Activated CD4-positive, alpha-beta T cell treated with anti-CD3 and anti-CD28 coated beads, Interleukin-2, amount 10 ng/mL, durations not matched to agents 7 days and 5 days (primary cell): ENCODE measurements at regions of chr2 and their contacts with region 1.

Region 1: GRCh38 chr2:104862058-104862941 is 8.4 kb downstream of the POU3F3 start:
- DNase-seq: no peak
- H3K4me3 Mint-ChIP-seq: no peak overlapping the region
- H3K27ac Mint-ChIP-seq: no peak overlapping the region
- H3K4me1 Mint-ChIP-seq: peaks cover 7% of the 10 kb centered on the region
- H3K27me3 Mint-ChIP-seq: peaks cover 88% of the 10 kb centered on the region

Region 2: DNA sequence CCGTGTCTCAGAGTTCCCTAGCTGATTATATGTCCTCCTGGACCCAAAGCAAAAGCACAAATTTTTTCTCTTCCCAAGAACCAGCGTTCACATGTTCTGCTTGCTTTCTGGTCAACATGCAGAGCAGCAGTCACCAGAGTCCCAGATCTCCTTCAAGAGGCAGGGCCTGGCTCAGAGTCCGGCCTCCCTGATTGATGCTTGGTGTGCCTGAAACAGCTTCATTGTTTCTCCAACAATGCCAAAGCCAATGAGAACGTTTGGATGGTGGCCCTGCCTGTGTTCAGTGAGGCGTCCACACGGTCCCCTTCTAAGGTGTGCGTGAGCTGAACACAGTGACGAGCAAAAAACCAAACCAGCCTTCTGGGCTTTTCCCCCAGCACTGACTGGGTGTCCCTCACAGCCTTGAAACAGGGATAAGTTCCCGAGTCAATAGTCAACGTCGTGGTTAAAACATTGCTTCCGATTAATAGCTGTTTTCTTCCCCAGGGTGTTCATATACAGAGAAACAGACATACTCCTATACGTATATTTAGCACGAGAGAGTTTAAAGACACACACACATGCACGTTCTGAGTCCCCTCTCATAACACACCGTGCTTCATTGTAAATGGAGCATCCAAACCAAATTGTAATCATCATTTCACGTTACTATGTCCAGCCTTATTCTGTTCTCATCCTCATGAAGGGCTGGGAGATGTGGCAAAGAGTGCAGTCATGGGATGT is 27.7 kb before region 1 on chr2:
- CTCF ChIA-PET with region 1: no interaction called
- POLR2A ChIA-PET with region 1: no interaction called
- DNase-seq: no peak
- H3K4me3 Mint-ChIP-seq: no peak overlapping the region
- H3K27ac Mint-ChIP-seq: no peak overlapping the region
- H3K4me1 Mint-ChIP-seq: no peaks in the 10 kb centered on the region
- H3K27me3 Mint-ChIP-seq: peaks cover 6% of the 10 kb centered on the region

Region 3: DNA sequence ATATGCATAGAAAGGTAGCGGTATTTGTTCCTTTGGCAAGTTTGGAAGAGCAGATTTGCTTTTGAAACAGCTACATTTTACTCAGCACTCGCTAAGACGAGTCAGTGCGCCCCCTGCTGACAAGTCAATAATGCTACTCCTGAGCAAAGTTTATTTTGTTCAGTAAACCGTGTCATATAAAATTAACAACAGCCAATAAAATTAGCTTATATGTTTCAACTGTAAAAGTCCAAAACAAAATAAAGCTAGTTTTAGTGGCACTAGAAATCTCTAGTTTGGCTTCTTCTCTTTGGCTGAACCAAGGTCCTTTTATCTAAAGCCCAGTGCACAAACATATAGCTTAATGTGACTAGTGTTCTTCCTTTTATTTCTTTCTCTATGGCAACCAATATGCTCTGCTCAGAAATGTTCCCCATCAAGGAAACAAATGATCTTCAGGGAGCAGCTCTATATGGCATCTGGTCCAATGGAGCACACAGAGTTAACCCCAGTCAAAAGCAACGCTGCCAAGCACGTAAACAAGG is 12.6 kb before region 1 on chr2:
- CTCF ChIA-PET with region 1: interaction called, 11 read pairs
- POLR2A ChIA-PET with region 1: no interaction called
- DNase-seq: peak; percentile 79
- H3K4me3 Mint-ChIP-seq: no peak overlapping the region
- H3K27ac Mint-ChIP-seq: no peak overlapping the region
- H3K4me1 Mint-ChIP-seq: peaks cover 27% of the 10 kb centered on the region
- H3K27me3 Mint-ChIP-seq: peaks cover 90% of the 10 kb centered on the region